ENCODE measurements at regions of chr19 and their contacts with region 1.

Region 1: GRCh38 chr19:51771376-51772130 is 10.6 kb downstream of the FPR2 start:
- DNase-seq: no peak
- ATAC-seq: peak in 3 of 4 donors; percentile 31 to 62 (median 56)
- H3K4me3 ChIP-seq: no peak overlapping the region
- H3K27ac ChIP-seq: peak overlapping the region in 2 of 12 donors; percentile 17 to 80
- H3K4me1 ChIP-seq: peaks cover 0 to 23% (median 0%) of the 10 kb centered on the region in 12 donors
- H3K27me3 ChIP-seq: peaks cover 0 to 17% (median 0%) of the 10 kb centered on the region in 9 donors
- CTCF ChIP-seq: no peak
- POLR2A ChIP-seq: no peak

Region 2: DNA sequence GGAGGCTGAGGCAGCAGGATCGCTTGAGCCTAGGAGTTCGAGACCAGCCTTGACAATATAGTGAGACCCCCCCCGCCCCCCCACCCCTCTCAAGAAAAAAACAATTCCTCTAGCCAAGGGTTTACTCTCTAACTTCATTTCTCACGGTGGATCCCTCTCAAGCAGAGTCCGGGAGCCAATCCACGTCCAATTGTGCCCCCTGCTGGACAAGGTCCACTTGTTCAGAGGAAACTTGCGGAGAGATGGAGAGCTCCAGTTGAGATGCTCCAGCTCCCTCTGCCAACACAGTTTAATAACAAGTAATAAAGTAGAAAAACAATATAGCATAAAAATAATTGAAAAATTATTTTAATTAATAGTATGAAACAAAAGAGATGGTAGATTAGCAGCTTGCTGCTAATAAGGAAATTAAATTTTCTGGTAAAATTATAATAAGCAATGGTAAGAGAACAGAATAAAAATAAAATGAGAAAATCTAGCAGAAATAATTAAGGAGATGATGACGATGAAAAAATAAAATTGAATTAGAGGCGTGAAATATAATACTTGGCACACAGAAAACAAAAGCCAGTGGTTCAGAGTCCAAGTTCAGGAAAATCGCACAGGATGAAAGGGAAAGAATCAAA is 110.5 kb before region 1 on chr19:
- intact Hi-C with region 1: loop called in 7 of 10 experiments (anchors 5 to 10 kb)
- DNase-seq: peak; percentile 70 to 79 (median 76)
- ATAC-seq: peak in 3 of 4 donors; percentile 68 to 86 (median 69)
- H3K4me3 ChIP-seq: no peak overlapping the region
- H3K27ac ChIP-seq: no peak overlapping the region
- H3K4me1 ChIP-seq: peaks cover 0 to 8% (median 0%) of the 10 kb centered on the region in 12 donors
- H3K27me3 ChIP-seq: peaks cover 0 to 40% (median 8%) of the 10 kb centered on the region in 9 donors
- CTCF ChIP-seq: peak; percentile 49 to 72 (median 59)
- POLR2A ChIP-seq: no peak